Left ventricle myocardium superior (tissue), 1 donor: ENCODE measurements at regions of chr17 and their contacts with region 1.

Region 1: GRCh38 chr17:38982858-38983746 is 15.9 kb upstream of the FBXO47 start:
- DNase-seq: no peak
- ATAC-seq: peak; percentile 81

Region 2: DNA sequence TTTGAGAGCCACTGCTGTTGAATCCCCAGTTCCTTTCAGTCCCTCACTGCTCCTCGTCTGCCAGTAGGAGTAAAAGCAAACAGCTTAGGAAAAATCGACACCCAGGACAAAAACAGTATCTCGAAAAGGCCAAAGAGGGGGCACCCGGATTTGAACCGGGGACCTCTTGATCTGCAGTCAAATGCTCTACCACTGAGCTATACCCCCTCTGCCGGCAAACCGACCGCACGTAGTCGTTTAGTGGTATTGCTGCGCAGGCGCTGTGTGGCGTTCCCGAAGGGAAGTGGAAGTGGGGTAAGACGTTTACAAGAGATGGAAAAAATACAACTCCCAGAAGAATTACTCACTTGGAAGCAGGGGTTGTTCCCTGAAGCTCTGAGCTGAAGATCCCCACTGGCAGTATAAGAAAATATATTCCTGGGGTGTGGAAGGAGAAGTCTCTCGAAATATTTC is 170.5 kb after region 1 on chr17:
- intact Hi-C with region 1: loop called (anchors 5 kb)
- DNase-seq: peak; percentile 91
- ATAC-seq: peak; percentile 84

Region 3: DNA sequence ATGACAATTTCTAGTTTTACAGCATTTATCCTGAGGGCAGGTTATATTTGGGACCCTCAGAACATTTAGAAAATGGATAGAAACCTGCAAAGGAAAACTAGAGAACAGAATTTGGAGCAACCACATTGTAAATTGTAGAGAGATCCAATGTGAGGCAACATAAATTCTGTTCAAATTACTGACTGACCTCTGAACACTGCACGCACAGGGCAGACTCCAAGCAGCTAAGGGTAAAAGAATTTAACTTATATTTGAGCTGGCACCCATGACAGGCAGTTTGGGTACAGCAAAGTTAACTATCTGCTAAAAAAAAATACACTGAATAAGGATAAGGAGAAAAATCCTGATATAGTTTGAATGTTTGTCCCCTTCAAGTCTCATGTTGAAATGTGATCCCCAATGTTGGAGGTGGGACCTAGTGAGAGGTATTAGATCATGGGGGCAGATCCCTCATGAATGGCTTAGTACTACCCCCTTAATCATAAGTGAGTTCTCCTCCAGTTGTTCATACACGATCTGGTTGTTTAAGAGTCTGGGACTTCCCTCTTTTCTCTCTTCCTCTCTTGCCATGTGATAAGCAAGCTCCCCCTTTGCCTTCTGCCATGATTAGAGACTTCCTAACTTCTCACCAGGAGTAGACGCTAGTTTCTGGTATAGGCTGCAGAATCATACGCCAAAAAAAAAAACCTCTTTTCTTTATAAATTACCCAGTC is 342.6 kb after region 1 on chr17:
- intact Hi-C with region 1: no loop called
- DNase-seq: no peak
- ATAC-seq: peak; percentile 14